Aorta (tissue), 5 donors: ENCODE measurements at regions of chr19 and their contacts with region 1.

Region 1: DNA sequence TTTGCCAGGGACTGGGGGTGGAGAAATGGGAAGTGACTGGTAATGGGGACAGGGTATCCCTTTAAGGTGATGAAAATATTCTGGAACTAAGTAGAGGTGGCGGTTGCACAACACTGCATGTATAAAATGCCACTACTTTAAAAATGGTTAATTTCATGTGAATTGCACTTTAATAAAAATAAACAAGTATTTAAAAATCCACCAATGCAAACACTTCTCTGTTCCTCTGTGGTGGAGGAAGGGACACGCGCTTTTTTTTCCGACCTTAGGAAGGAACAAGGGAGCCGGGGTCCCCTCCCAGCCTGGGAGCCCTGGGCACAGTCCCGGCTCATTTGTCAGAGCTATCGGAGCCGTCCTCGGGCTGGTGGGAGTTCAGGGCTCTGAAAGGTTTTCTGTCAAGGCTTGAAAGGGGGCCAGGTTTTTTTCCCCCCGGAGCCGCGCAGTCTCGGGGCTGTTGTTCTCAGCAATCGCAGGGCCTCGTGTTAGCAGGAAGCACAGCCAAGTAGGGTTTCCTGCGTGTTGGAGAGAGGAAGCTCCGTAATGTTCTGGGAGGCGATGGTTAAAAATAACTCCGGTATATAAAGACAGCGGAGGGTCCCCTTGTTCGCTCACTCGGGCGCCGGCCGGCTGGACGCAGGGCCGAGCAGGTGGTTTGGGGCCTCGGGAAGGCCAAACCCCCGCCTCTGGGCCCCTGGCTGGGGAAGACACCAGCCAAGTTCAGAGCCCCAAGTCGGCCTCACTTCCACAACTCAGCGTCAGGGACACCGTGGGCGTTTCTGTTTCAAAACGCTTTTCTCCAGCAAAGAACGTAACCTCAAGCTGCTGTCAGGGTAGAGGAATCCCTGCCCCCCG is 41.2 kb upstream of the KLF2 start:
- DNase-seq: peak; percentile 89 to 93
- ATAC-seq: peak; percentile 88
- H3K4me3 ChIP-seq: no peak overlapping the region
- H3K27ac ChIP-seq: peak overlapping the region; percentile 81 to 90
- H3K4me1 ChIP-seq: no peaks in the 10 kb centered on the region
- H3K27me3 ChIP-seq: no peaks in the 10 kb centered on the region

Region 2: DNA sequence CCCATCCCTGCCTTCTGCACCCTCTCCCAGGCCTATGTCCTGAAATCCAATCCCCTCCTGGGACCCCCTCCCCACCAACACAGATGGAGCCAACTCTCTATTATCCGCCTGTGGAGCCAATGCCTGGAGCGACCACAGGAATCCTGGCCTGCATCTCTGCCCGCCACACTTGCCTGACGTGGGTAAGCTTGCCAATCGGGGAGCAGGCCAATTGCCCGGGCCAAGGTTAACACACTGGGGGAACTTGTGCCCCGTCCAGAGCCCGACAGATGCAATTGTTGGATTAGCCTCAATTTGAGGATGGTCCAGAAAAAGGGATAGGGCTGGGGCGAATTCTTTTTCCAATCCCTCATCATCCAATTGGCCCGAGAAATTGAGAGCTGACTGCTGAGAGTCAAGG is 839.6 kb before region 1 on chr19:
- intact Hi-C with region 1: loop called in 1 of 2 experiments (anchors 5 kb)
- DNase-seq: peak; percentile 84 to 90
- ATAC-seq: peak; percentile 39
- H3K4me3 ChIP-seq: no peak overlapping the region
- H3K27ac ChIP-seq: peak overlapping the region in 1 of 2 donors; percentile 22
- H3K4me1 ChIP-seq: peaks cover 0 to 1% of the 10 kb centered on the region in 2 donors
- H3K27me3 ChIP-seq: no peaks in the 10 kb centered on the region

Region 3: GRCh38 chr19:16095071-16095571 is 188.3 kb before region 1 on chr19:
- intact Hi-C with region 1: no loop called
- DNase-seq: no peak
- ATAC-seq: no peak
- H3K4me3 ChIP-seq: no peak overlapping the region
- H3K27ac ChIP-seq: no peak overlapping the region
- H3K4me1 ChIP-seq: peaks cover 0 to 2% of the 10 kb centered on the region in 2 donors
- H3K27me3 ChIP-seq: no peaks in the 10 kb centered on the region